Ascending aorta (tissue), 2 donors: ENCODE measurements at regions of chr1 and their contacts with region 1.

Region 1: GRCh38 chr1:54542120-54542961 is 5.7 kb upstream of the ACOT11 start:
- DNase-seq: peak; percentile 37 to 83
- H3K4me3 ChIP-seq: peak overlapping the region; percentile 61 to 67
- H3K27ac ChIP-seq: peak overlapping the region; percentile 89 to 92
- H3K4me1 ChIP-seq: peaks cover under 1 to 15% of the 10 kb centered on the region in 2 donors
- H3K27me3 ChIP-seq: no peaks in the 10 kb centered on the region
- CTCF ChIP-seq: peak in 1 of 3 experiments; percentile 15

Region 2: DNA sequence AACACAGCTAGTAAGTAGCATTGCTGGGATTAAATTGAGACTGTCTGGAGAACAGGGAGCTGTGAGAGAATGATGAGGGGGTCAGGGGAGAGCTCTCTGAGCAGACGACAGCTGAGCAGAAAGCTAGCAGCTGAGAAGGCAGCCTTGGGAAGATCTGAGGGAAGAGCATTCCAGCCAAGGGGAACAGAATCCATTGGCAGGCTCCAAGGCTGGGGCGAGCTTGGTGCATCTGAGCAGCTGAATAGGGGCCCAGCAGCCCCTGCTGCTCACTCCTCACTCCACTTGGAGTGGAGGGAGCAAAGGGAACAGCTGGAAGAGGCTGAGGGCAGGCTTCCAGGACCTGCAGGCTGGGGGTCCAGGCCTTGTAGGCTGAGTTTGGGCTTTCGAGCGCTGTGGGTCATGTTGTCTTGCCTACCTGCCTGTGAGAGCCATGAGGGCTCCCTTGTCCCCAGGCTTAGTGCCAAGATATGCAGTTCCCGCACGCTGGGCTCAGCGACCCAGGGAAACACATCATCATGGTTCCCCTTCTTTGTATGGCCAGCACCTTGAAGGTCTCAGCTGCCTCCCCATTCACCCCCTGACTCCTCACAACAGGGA is 16.2 kb after region 1 on chr1:
- intact Hi-C with region 1: no loop called
- DNase-seq: peak in 1 of 2 donors; percentile 40
- H3K4me3 ChIP-seq: no peak overlapping the region
- H3K27ac ChIP-seq: no peak overlapping the region
- H3K4me1 ChIP-seq: peaks cover 2 to 14% of the 10 kb centered on the region in 2 donors
- H3K27me3 ChIP-seq: no peaks in the 10 kb centered on the region
- CTCF ChIP-seq: no peak

Region 3: DNA sequence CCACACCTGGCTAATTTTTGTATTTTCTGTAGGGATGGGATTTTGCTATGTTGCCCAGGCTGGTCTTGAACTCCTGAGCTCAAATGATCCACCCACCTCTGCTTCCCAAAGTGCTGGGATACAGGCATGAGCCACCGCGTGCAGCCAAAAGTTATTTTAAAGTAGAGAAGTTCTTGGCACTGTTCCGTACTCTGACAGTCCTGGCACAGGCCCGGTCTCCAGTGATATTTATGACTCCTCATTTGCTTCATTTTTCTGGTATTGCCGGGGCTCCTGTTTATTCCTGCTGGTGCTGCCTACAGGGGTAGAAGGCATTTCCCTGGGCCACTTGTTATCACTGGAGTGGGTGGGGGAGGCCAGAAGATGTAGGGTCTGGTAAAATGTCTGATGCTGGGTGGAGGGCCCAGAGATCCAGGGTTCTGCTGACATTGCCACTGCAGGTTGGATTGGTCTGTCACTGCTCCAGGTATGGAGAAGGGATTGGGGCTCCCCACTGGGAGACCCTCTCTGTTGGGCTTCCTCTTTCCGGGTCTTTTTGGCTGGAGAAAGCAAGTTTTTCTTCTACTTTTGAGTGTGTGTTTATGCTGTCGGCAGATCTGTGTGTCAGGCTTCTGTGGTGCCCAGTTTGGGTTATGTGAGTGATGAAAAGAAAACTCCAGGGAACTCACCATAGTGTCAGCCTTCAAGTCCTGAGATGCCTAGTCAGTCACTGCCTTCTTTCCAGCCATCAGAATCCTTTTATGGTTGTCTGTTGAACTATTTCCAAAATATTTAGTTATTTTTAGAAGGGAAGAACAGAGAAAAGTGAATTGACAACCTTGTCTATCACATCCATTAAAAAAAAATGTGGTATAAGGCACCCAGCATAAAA is 103.7 kb after region 1 on chr1:
- intact Hi-C with region 1: loop called (anchors 5 kb)
- DNase-seq: peak; percentile 10 to 81
- H3K4me3 ChIP-seq: no peak overlapping the region
- H3K27ac ChIP-seq: peak overlapping the region; percentile 34 to 54
- H3K4me1 ChIP-seq: peaks cover 3 to 4% of the 10 kb centered on the region in 2 donors
- H3K27me3 ChIP-seq: no peaks in the 10 kb centered on the region
- CTCF ChIP-seq: no peak